Mammary epithelial cell (primary cell): ENCODE measurements at regions of chr17 and their contacts with region 1.

Region 1: DNA sequence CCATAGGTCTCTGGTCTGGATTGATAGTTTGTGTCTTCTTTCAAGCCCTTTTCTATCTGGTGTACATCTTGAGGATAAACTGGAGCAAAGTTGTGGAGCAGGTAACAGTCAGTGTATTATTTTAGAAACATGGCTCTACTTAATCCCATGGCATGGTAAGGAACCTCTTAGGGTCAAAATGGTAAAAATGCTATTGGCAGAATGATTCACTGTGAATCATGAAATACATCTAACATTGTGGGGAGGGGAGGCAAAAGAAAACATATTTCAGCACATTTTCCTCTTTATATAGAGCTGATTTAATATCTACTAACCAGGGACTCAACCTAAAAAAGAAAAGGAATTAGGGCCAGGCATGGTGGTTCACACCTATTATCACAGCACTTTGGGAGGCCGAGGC is 17.9 kb upstream of the ALDH3A2 start:
- DNase-seq: no peak
- H3K4me3 ChIP-seq: no peak overlapping the region
- H3K27ac ChIP-seq: no peak overlapping the region
- H3K4me1 ChIP-seq: no peaks in the 10 kb centered on the region
- H3K27me3 ChIP-seq: no peaks in the 10 kb centered on the region
- CTCF ChIP-seq: no peak

Region 2: GRCh38 chr17:19590912-19591551 is 39.6 kb before region 1 on chr17:
- CTCF ChIA-PET with region 1: no interaction called
- dilution Hi-C with region 1: loop called (anchors 5 kb)
- in situ Hi-C with region 1: no loop called
- intact Hi-C with region 1: no loop called
- DNase-seq: no peak
- H3K4me3 ChIP-seq: no peak overlapping the region
- H3K27ac ChIP-seq: no peak overlapping the region
- H3K4me1 ChIP-seq: no peaks in the 10 kb centered on the region
- H3K27me3 ChIP-seq: no peaks in the 10 kb centered on the region
- CTCF ChIP-seq: no peak

Region 3: DNA sequence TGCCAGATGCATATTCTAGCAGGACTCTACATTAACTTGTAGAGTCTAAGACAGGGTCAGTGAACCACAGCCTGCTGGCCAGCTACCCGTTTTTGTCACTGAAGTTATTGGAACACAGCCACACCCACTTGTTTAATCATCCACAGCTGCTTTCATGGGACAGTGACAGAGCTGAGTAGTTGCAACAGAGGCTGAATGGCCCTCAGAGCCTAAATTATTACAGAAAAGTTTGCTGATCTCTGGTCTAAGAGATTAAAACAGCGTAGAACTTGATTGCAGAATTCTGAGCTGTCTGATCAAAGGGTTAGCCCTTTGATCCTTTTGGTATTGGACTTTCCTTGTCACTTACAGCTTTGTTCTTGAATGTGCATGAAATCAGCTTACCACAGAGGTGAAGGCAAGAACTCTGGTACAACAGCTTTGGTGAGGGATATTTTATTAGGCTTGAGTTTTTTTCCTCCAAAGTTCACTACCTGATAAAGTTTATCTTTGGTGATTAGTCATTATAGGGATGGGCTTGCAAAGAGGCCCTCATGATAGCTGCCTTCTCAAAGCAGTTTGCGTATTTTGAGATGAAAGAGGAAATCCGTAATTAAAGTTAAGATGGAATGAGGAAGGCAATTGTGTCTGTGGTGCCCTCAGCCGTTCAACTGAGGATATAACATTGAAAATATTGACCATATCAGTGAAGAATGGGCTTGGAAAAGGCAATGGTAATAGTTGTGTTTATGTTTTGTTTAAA is 41.5 kb after region 1 on chr17:
- CTCF ChIA-PET with region 1: no interaction called
- dilution Hi-C with region 1: no loop called
- in situ Hi-C with region 1: no loop called
- intact Hi-C with region 1: no loop called
- DNase-seq: no peak
- H3K4me3 ChIP-seq: no peak overlapping the region
- H3K27ac ChIP-seq: no peak overlapping the region
- H3K4me1 ChIP-seq: no peaks in the 10 kb centered on the region
- H3K27me3 ChIP-seq: no peaks in the 10 kb centered on the region
- CTCF ChIP-seq: no peak

Region 4: DNA sequence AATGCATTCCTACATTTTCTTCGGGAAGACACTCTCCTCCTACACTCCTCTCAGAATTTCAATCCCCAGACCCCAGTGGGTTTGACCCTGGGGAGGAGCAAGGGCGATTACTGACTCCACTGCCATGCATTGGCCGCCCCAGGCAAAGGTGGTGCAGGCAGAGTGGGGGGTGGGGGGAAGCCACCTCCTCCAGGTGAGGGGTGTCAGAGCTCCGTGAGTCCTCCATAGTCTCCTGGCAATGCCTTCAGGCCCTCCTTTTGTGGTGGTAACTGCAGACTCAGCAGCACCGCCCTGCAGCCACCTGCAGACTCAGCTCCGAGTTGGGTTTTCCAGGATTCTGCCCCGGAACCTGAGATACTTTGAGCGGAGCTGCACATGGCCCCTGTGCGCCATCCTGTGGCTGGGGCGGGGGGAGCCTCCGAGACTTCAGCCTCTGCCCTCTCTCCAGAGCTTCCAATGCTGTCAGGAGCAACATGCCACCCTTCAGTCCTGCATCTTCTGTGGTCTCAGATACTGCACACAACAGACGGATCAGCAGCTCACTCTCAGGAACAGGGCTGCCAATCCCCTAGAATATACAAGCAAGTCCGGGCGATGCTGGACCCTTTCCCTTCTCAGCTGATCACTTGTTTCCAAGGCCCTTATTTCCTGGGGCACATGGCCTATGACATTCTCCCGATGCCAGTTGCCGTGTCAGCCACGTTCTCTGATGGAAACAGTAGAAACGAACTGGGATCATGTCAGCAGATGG is 88.1 kb after region 1 on chr17:
- CTCF ChIA-PET with region 1: no interaction called
- dilution Hi-C with region 1: no loop called
- in situ Hi-C with region 1: no loop called
- intact Hi-C with region 1: no loop called
- DNase-seq: peak; percentile 23
- H3K4me3 ChIP-seq: no peak overlapping the region
- H3K27ac ChIP-seq: peak overlapping the region; percentile 45
- H3K4me1 ChIP-seq: peaks cover 50% of the 10 kb centered on the region
- H3K27me3 ChIP-seq: no peaks in the 10 kb centered on the region
- CTCF ChIP-seq: peak; percentile 49 to 75